ENCODE measurements at regions of chr18 and their contacts with region 1.

Region 1: GRCh38 chr18:3703732-3704176 is 253.8 kb downstream of the TGIF1 start:
- DNase-seq: peak; percentile 64
- ATAC-seq: peak; percentile 91

Region 2: DNA sequence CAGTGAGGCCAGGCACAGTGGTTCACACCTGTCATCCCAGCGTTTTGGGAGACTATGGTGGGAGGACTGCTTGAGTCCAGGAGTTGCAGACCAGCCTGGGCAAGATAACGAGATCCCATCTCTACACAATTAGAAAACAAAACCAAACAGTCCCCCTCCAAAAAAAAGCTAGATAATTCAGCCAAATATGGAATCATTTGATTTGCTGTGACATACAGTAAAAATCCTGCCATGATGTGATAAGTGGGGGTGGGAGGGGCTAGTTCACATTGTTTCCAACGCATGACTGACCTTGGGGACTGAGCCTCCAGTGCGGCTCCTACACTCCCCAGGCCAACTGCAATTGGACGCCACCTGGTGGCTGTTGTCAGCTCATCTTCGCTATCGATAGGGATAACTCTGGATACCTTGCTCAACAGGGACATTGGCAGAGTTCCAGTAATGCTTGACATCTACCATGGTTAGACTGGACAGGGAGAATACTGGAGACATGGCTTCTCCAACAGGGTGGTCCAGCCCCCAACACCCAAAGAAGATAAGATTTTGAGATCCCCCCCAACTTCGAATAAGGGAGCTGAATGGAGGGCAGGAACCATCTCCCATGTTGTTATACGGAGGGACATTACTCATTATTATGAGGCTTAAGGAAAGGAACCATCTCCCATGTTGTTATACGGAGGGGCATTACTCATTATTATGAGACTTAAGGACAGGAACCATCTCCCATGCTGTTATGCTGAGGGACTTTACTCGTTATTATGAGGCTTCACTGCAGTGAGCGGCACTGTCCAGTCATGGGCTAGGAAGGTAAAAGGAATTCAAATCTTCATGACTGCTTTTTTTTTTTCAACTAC is 117.9 kb before region 1 on chr18:
- intact Hi-C with region 1: no loop called
- DNase-seq: peak; percentile 82
- ATAC-seq: peak; percentile 93

Region 3: GRCh38 chr18:3782901-3783300 is 79.1 kb after region 1 on chr18:
- intact Hi-C with region 1: no loop called
- DNase-seq: no peak
- ATAC-seq: no peak

Region 4: GRCh38 chr18:3995476-3996102 is 291.8 kb after region 1 on chr18:
- intact Hi-C with region 1: loop called (anchors 10 kb)
- DNase-seq: no peak
- ATAC-seq: peak; percentile 64

Measured in Right ventricle myocardium superior (tissue), 1 donor.